Activated naive CD4-positive, alpha-beta T cell treated with anti-CD3 and anti-CD28 coated beads for 36 hours (primary cell): ENCODE measurements at regions of chr10 and their contacts with region 1.

Region 1: GRCh38 chr10:68156373-68157185 is 47.3 kb downstream of the MYPN start:
- DNase-seq: peak; percentile 83
- H3K4me3 Mint-ChIP-seq: no peak overlapping the region
- H3K27ac Mint-ChIP-seq: no peak overlapping the region
- H3K4me1 Mint-ChIP-seq: peaks cover 2% of the 10 kb centered on the region
- H3K27me3 Mint-ChIP-seq: peaks cover 3% of the 10 kb centered on the region

Region 2: GRCh38 chr10:67666416-67667034 is 490.1 kb before region 1 on chr10:
- CTCF ChIA-PET with region 1: no interaction called
- intact Hi-C with region 1: loop called (anchors 10 kb)
- DNase-seq: no peak
- H3K4me3 Mint-ChIP-seq: no peak overlapping the region
- H3K27ac Mint-ChIP-seq: no peak overlapping the region
- H3K4me1 Mint-ChIP-seq: no peaks in the 10 kb centered on the region
- H3K27me3 Mint-ChIP-seq: no peaks in the 10 kb centered on the region

Region 3: GRCh38 chr10:67697724-67698131 is 458.9 kb before region 1 on chr10:
- CTCF ChIA-PET with region 1: interaction called, 4 read pairs
- intact Hi-C with region 1: loop called (anchors 10 kb)
- DNase-seq: peak; percentile 10
- H3K4me3 Mint-ChIP-seq: no peak overlapping the region
- H3K27ac Mint-ChIP-seq: no peak overlapping the region
- H3K4me1 Mint-ChIP-seq: no peaks in the 10 kb centered on the region
- H3K27me3 Mint-ChIP-seq: peaks cover 10% of the 10 kb centered on the region

Region 4: GRCh38 chr10:68032113-68032512 is 124.5 kb before region 1 on chr10:
- CTCF ChIA-PET with region 1: no interaction called
- intact Hi-C with region 1: no loop called
- DNase-seq: no peak
- H3K4me3 Mint-ChIP-seq: no peak overlapping the region
- H3K27ac Mint-ChIP-seq: no peak overlapping the region
- H3K4me1 Mint-ChIP-seq: peaks cover 2% of the 10 kb centered on the region
- H3K27me3 Mint-ChIP-seq: no peaks in the 10 kb centered on the region

Region 5: GRCh38 chr10:68082872-68083271 is 73.7 kb before region 1 on chr10:
- CTCF ChIA-PET with region 1: interaction called, 10 read pairs
- intact Hi-C with region 1: loop called (anchors 1 kb)
- DNase-seq: no peak
- H3K4me3 Mint-ChIP-seq: no peak overlapping the region
- H3K27ac Mint-ChIP-seq: no peak overlapping the region
- H3K4me1 Mint-ChIP-seq: peaks cover 2% of the 10 kb centered on the region
- H3K27me3 Mint-ChIP-seq: peaks cover 5% of the 10 kb centered on the region

Region 6: DNA sequence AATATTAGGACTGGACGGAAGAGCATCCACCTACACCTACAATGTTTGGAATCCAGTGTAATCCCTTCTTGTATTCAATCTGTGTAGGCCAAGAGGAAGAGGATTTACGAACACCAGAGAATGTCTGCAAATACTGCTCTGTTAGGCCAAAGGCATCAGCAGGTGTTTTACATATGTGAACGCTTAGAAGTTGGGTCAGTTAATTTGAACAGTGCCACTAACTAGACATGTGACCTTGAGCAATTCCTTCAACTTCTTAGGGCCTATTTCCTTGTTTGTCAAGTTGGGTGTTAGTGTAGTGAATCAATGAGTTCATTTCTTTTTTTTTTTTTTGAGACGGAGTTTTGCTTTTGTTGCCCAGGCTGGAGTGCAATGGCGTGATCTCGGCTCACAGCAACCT is 11.9 kb before region 1 on chr10:
- CTCF ChIA-PET with region 1: interaction called, 12 read pairs
- intact Hi-C with region 1: no loop called
- DNase-seq: no peak
- H3K4me3 Mint-ChIP-seq: no peak overlapping the region
- H3K27ac Mint-ChIP-seq: no peak overlapping the region
- H3K4me1 Mint-ChIP-seq: no peaks in the 10 kb centered on the region
- H3K27me3 Mint-ChIP-seq: peaks cover 6% of the 10 kb centered on the region

Region 7: GRCh38 chr10:68276224-68276623 is 119.6 kb after region 1 on chr10:
- CTCF ChIA-PET with region 1: no interaction called
- intact Hi-C with region 1: no loop called
- DNase-seq: no peak
- H3K4me3 Mint-ChIP-seq: no peak overlapping the region
- H3K27ac Mint-ChIP-seq: no peak overlapping the region
- H3K4me1 Mint-ChIP-seq: no peaks in the 10 kb centered on the region
- H3K27me3 Mint-ChIP-seq: no peaks in the 10 kb centered on the region